ENCODE measurements at regions of chr10 and their contacts with region 1.

Region 1: DNA sequence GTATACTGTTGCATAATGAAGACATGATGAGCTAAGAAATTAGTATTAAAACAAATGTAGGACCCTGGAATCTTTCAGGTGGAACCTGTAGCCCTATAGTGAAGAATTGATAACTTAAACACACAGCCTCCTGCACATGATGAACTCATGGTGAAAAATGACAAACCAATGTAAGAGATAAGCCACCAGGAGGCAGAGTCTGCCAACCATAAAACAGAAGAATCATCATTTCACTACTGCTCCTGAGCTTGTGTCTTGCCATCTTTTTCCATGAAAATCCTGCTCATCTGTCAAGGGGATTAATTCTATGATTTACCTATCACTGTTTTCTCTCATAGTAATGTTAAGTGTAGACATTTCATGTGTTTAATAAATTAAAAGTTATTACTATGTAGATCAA is 363.9 kb downstream of the MALRD1 start:
- DNase-seq: peak in 4 of 7 donors; percentile 15 to 27 (median 23)
- H3K4me3 ChIP-seq: no peak overlapping the region
- H3K27ac ChIP-seq: no peak overlapping the region
- H3K4me1 ChIP-seq: no peaks in the 10 kb centered on the region
- H3K27me3 ChIP-seq: no peaks in the 10 kb centered on the region
- CTCF ChIP-seq: peak; percentile 43 to 63 (median 56)
- POLR2A ChIP-seq: no peak

Region 2: DNA sequence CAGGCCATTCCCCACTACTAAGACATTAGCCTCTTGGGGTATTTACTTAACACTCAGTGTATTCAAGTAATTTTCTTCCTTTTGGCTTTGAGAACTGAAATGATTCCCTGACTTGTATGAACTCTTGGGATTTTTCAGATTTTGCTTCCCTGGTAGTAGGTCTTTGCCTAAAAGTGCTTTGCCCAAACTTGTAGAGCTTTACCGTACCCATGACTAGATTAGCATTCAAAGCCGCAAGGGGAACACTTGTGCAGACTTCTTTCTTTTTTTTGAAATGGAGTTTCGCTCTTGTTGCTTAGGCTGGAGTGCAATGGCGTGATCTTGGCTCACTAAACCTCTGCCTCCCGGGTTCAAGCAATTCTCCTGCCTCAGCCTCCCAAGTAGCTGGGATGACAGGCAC is 1774.7 kb before region 1 on chr10:
- intact Hi-C with region 1: no loop called
- DNase-seq: no peak
- H3K4me3 ChIP-seq: no peak overlapping the region
- H3K27ac ChIP-seq: no peak overlapping the region
- H3K4me1 ChIP-seq: peaks cover 0 to 6% of the 10 kb centered on the region in 2 donors
- H3K27me3 ChIP-seq: no peaks in the 10 kb centered on the region
- CTCF ChIP-seq: no peak
- POLR2A ChIP-seq: no peak

Region 3: DNA sequence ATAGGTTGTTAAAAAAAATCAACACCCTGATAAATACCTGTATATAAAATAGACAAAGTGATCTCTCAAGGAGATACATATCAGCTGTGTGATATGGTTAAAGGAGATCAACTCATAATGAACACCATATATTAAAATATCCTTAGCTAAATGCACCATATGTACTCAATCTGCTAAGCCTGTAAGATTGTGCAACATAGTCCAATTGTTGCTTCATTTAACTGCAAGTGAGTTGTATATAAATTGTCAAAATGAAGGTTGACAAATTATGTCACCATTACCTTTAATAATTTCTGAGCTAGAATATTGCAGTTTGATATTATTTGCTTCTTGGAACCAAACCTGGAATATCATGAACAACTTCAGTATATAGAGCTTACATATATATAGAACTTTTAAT is 80.2 kb before region 1 on chr10:
- intact Hi-C with region 1: no loop called
- DNase-seq: no peak
- H3K4me3 ChIP-seq: no peak overlapping the region
- H3K27ac ChIP-seq: no peak overlapping the region
- H3K4me1 ChIP-seq: no peaks in the 10 kb centered on the region
- H3K27me3 ChIP-seq: no peaks in the 10 kb centered on the region
- CTCF ChIP-seq: no peak
- POLR2A ChIP-seq: no peak

Region 4: GRCh38 chr10:19730167-19730906 is 317.8 kb after region 1 on chr10:
- intact Hi-C with region 1: no loop called
- DNase-seq: no peak
- H3K4me3 ChIP-seq: no peak overlapping the region
- H3K27ac ChIP-seq: no peak overlapping the region
- H3K4me1 ChIP-seq: no peaks in the 10 kb centered on the region
- H3K27me3 ChIP-seq: no peaks in the 10 kb centered on the region
- CTCF ChIP-seq: no peak
- POLR2A ChIP-seq: no peak

Region 5: GRCh38 chr10:19788075-19788686 is 375.6 kb after region 1 on chr10:
- intact Hi-C with region 1: loop called in 1 of 2 experiments (anchors 10 kb)
- DNase-seq: peak; percentile 17 to 73 (median 39)
- H3K4me3 ChIP-seq: no peak overlapping the region
- H3K27ac ChIP-seq: no peak overlapping the region
- H3K4me1 ChIP-seq: peaks cover 0 to 6% of the 10 kb centered on the region in 2 donors
- H3K27me3 ChIP-seq: no peaks in the 10 kb centered on the region
- CTCF ChIP-seq: peak; percentile 59 to 87 (median 76)
- POLR2A ChIP-seq: no peak